ENCODE measurements at regions of chr7 and their contacts with region 1.

Region 1: GRCh38 chr7:66075590-66076461 is at the start of gene ASL:
- DNase-seq: peak; percentile 88 to 99 (median 94)
- H3K4me3 ChIP-seq: peak within 1 kb of the TSS; percentile 49 to 100 (median 89)
- H3K27ac ChIP-seq: peak within 1 kb of the TSS in 45 of 59 donors; percentile 9 to 88 (median 63)
- H3K27me3 ChIP-seq: no peaks in the 10 kb centered on the region
- CTCF ChIP-seq: peak in 18 of 56 donors; percentile 4 to 46 (median 18)
- total RNA-seq, gene ASL: 12.3 to 38.5 (median 20.3) TPM

Region 2: DNA sequence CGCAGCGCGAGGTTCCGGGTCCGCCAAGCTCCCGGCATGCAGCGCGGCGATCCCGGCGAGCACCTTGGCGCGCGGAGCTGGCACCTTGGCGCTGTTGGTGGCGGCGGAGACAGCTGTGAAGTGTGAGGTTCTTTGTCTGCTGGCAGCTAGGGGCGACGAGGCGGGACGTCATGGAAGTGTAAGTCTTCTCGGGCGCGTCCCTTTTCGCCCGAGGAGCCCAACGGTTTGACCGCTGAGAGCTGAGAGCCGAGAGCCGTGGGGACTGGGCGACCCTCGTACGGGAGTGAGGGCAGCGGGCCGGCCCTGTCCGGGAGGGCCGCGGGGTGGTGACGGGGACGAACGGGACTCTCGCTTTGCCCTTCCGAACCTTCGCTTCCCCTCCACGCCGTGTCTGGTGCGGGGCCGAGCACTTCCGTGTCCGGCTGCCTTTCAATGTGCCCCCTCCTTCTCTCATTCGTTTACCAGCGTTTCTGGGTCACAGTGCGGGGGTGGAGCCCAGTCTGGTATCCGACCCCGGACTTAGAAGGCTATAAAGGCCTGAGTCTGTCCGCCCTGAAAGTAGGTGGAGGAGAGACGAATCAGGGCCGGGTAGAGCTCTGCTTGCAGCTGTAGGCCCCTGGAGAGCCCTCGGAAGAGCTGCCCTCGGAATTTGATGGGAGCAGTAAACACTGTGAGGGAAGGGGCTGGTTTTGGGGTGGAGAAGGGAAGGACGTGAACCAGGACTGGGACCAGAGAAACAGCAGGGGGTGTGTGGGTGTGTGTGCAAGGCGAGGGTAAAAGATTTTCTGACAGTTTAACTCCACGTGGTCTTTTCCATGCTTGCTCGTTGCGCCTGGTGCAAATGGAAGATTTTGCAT is 39.2 kb after region 1 on chr7 and contains the start of gene CRCP:
- intact Hi-C with region 1: loop called in 1 of 2 experiments (anchors 5 kb)
- DNase-seq: peak; percentile 60 to 87 (median 76)
- H3K4me3 ChIP-seq: peak within 1 kb of the TSS; percentile 67 to 98 (median 89)
- H3K27ac ChIP-seq: peak within 1 kb of the TSS; percentile 57 to 97 (median 90)
- H3K27me3 ChIP-seq: no peaks in the 10 kb centered on the region
- CTCF ChIP-seq: peak in 18 of 56 donors; percentile 10 to 39 (median 24)
- total RNA-seq, gene CRCP: 28.7 to 54.3 (median 38.6) TPM

Region 3: DNA sequence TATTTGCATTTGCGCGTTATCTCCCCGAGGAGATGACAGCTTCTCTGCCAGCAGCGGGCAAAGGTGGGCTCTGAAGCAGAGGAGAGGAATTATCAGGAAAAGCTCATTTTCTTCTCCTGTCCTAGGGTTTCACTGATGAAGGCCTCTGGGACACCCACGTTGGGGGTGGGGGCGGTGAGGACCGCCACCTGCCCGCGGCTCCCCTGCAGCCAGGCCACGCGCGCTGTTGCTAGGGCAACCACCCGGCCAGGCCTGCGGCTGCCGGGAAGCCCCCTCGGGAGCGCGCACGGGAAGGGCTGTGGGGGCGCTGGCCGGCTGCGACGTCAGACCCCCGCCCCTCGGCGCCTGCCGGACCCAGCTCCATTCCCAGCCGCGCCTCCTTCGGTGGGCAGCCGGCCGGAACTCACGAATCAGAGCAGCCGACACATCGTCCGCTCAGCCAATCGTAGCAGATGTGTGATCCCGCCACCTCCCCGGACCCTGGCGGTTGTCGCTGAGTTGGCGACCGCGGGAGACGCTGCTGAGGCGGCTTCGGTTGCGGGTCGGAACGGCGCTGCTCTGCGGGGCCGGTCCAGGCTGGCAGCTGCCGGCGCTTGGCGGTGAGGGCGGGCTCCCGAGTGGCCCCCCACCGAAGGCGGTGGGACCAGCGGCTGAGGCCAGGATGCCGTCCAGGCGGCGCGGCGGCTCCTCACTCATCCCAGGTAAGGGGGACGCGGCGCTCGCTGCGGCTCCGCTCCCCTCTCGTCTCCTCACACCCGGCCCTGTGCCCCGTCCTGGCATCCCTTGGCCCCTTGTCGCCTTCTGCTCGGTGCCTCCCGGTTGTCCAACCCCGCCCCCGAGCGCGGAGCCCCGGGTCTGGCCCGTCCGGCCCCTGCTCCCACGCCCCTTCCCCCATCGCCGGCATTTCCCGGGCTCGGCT is 129.3 kb after region 1 on chr7 and contains the start of gene TPST1:
- intact Hi-C with region 1: loop called in 1 of 2 experiments (anchors 5 kb)
- DNase-seq: peak; percentile 89 to 98 (median 95)
- H3K4me3 ChIP-seq: peak within 1 kb of the TSS; percentile 64 to 100 (median 96)
- H3K27ac ChIP-seq: peak within 1 kb of the TSS; percentile 48 to 95 (median 84)
- H3K27me3 ChIP-seq: no peaks in the 10 kb centered on the region
- CTCF ChIP-seq: peak in 54 of 56 donors; percentile 11 to 76 (median 60)
- total RNA-seq, gene TPST1: 24.1 to 80.0 (median 37.7) TPM